Heart right ventricle (tissue), 16 donors: ENCODE measurements at regions of chr3 and their contacts with region 1.

Region 1: DNA sequence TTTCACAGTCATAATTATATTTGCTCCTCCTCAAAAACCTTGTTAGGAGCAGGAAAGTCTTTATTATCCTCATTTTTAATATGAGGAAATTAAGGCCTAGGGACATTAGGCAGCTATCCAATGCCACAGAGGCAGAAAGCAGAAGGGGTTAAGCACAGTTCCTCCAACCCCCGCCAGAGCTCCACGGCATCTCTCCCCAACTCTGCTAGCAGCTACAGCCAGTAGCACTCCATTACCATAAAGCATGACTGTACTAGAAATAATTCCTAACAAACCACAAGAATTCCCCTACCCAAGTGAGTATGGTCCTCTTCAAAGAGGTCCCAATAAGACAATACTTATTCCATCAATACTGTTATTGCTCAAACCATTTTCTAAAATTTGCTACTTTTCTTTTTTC is 9.8 kb downstream of the HEG1 start:
- DNase-seq: no peak
- ATAC-seq: no peak
- H3K4me3 ChIP-seq: no peak overlapping the region
- H3K27ac ChIP-seq: peak overlapping the region in 7 of 10 donors; percentile 84 to 99 (median 94)
- H3K4me1 ChIP-seq: peaks cover 68 to 100% (median 97%) of the 10 kb centered on the region in 9 donors
- H3K27me3 ChIP-seq: no peaks in the 10 kb centered on the region
- CTCF ChIP-seq: no peak

Region 2: GRCh38 chr3:124772081-124772831 is 273.7 kb before region 1 on chr3:
- intact Hi-C with region 1: loop called in 1 of 10 experiments (anchors 10 kb)
- DNase-seq: peak; percentile 47 to 70
- ATAC-seq: peak; percentile 7 to 65 (median 54)
- H3K4me3 ChIP-seq: no peak overlapping the region
- H3K27ac ChIP-seq: peak overlapping the region; percentile 2 to 83 (median 66)
- H3K4me1 ChIP-seq: peaks cover 17 to 83% (median 71%) of the 10 kb centered on the region in 9 donors
- H3K27me3 ChIP-seq: no peaks in the 10 kb centered on the region
- CTCF ChIP-seq: no peak

Region 3: GRCh38 chr3:125003369-125003853 is 42.6 kb before region 1 on chr3:
- intact Hi-C with region 1: loop called in 9 of 10 experiments (anchors 2 to 10 kb)
- DNase-seq: peak; percentile 35 to 71
- ATAC-seq: peak; percentile 76 to 95 (median 90)
- H3K4me3 ChIP-seq: no peak overlapping the region
- H3K27ac ChIP-seq: peak overlapping the region; percentile 17 to 84 (median 52)
- H3K4me1 ChIP-seq: peaks cover 20 to 81% (median 66%) of the 10 kb centered on the region in 9 donors
- H3K27me3 ChIP-seq: no peaks in the 10 kb centered on the region
- CTCF ChIP-seq: no peak

Region 4: GRCh38 chr3:125141596-125142419 is 95.8 kb after region 1 on chr3:
- intact Hi-C with region 1: loop called in 3 of 10 experiments (anchors 5 kb)
- DNase-seq: peak; percentile 78 to 82
- ATAC-seq: peak; percentile 76 to 92 (median 87)
- H3K4me3 ChIP-seq: peak overlapping the region in 9 of 10 donors; percentile 21 to 51 (median 47)
- H3K27ac ChIP-seq: peak overlapping the region; percentile 59 to 94 (median 84)
- H3K4me1 ChIP-seq: peaks cover 26 to 80% (median 59%) of the 10 kb centered on the region in 9 donors
- H3K27me3 ChIP-seq: no peaks in the 10 kb centered on the region
- CTCF ChIP-seq: peak in 8 of 9 donors; percentile 23 to 74 (median 58)